ENCODE measurements at regions of chrX and their contacts with region 1.

Region 1: GRCh38 chrX:15645258-15645657 is 19.3 kb downstream of the CLTRN start:
- DNase-seq: no peak
- H3K4me3 ChIP-seq: no peak overlapping the region
- H3K27ac ChIP-seq: no peak overlapping the region
- H3K4me1 ChIP-seq: no peaks in the 10 kb centered on the region
- H3K27me3 ChIP-seq: peaks cover 2 to 6% of the 10 kb centered on the region in 2 experiments
- CTCF ChIP-seq: no peak
- POLR2A ChIP-seq: no peak

Region 2: DNA sequence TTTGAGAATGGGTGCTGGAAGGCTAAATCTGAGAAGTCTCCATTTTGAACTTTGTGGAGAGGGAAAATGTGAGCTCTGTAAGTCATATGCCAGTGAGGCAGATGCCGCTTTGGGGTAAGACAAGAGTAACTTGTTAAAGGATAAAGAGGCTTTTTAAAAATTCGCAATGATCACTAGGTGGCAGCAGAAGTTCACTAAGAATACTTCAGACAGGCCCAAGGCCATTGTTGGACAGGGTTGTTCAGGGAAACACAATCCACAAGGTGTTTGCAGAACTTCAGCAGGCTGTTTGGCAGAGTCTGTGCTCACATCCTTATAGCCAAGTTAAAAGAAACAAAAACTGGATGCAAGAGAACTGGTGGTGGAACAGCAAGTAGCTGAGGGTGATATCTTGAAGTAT is 296.2 kb before region 1 on chrX:
- CTCF ChIA-PET with region 1: no interaction called
- POLR2A ChIA-PET with region 1: no interaction called
- dilution Hi-C with region 1: no loop called
- intact Hi-C with region 1: loop called (anchors 5 kb)
- DNase-seq: peak; percentile 64
- H3K4me3 ChIP-seq: no peak overlapping the region
- H3K27ac ChIP-seq: no peak overlapping the region
- H3K4me1 ChIP-seq: no peaks in the 10 kb centered on the region
- H3K27me3 ChIP-seq: no peaks in the 10 kb centered on the region
- CTCF ChIP-seq: peak; percentile 15 to 38
- POLR2A ChIP-seq: no peak

Region 3: GRCh38 chrX:15579778-15580747 is 65.2 kb before region 1 on chrX:
- CTCF ChIA-PET with region 1: no interaction called
- POLR2A ChIA-PET with region 1: no interaction called
- dilution Hi-C with region 1: no loop called
- intact Hi-C with region 1: loop called (anchors 10 kb)
- DNase-seq: peak; percentile 80
- H3K4me3 ChIP-seq: no peak overlapping the region
- H3K27ac ChIP-seq: no peak overlapping the region
- H3K4me1 ChIP-seq: peaks cover 9% of the 10 kb centered on the region
- H3K27me3 ChIP-seq: no peaks in the 10 kb centered on the region
- CTCF ChIP-seq: no peak
- POLR2A ChIP-seq: no peak

Region 4: DNA sequence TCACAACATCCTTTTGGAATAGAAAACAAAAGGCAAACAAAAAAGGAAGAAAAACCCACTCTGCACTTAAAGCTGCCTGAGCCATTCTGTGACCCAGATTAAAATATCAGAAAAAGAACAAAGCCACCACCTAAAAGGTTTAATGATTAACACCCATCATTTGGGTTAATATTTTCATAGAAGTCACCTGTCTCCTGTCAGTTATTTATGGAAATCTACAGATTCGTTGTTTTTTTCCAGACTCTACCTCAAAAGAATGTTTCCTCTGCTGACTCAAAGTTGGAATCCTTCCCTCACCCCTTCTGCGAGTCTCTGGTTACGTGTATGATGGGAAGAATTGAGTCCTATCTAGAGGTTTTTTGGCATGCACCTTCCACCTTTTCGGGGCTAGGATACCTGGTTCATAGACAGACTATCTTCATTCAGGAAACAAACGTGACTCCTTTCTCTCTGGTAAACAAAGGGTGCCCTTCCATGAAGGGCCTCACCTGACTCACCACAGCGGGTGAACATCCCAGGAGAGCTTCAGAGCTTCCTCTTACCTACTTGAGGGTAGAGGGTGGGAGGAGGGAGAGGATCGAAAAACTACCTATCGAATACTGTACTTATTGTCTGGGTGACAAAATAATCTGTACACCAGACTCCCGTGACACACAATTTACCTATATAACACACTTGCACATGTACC is 73.2 kb after region 1 on chrX:
- CTCF ChIA-PET with region 1: no interaction called
- POLR2A ChIA-PET with region 1: no interaction called
- dilution Hi-C with region 1: no loop called
- intact Hi-C with region 1: no loop called
- DNase-seq: no peak
- H3K4me3 ChIP-seq: no peak overlapping the region
- H3K27ac ChIP-seq: no peak overlapping the region
- H3K4me1 ChIP-seq: no peaks in the 10 kb centered on the region
- H3K27me3 ChIP-seq: no peaks in the 10 kb centered on the region
- CTCF ChIP-seq: no peak
- POLR2A ChIP-seq: no peak

Region 5: DNA sequence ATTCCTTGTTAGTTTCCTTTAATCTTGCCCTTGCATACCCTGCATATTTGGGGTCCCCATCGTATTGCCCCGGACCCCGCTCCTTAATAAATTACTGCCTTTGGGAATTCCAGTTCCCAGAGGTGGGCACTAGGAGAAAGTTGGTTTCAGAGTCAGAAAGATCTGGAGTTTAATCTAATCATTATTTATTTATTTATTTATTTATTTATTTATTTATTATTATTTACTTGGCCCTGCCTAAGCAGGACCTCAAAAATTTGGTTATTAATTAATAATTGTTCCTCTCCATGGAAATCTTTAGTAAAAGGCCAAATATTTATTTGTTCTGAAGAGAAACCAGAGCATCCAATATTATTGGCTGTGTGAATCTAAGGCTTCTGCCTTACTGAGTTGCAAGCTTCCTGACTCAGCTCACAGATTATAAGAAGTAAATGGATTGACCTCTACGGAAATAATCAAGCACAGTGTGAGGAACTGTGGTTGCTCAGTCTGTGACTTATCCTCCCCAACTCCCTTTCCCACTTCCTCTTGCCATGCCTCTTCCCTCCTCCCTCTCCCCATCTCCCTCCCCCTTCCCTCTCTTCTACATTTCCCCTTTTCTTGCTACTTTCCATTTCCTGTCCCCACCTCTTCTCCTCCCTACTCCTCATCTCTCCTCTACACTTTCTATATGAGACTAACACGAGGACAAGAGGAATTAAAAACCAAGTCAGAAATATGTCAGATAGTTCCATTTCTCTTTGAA is 270.9 kb after region 1 on chrX:
- CTCF ChIA-PET with region 1: no interaction called
- POLR2A ChIA-PET with region 1: no interaction called
- dilution Hi-C with region 1: no loop called
- intact Hi-C with region 1: no loop called
- DNase-seq: no peak
- H3K4me3 ChIP-seq: no peak overlapping the region
- H3K27ac ChIP-seq: peak overlapping the region; percentile 34
- H3K4me1 ChIP-seq: peaks cover 15% of the 10 kb centered on the region
- H3K27me3 ChIP-seq: peaks cover 2% of the 10 kb centered on the region in 2 experiments
- CTCF ChIP-seq: no peak
- POLR2A ChIP-seq: no peak

Measured in endothelial cell of umbilical vein (primary cell).